Transverse colon (tissue), 4 donors: ENCODE measurements at regions of chr2 and their contacts with region 1.

Region 1: DNA sequence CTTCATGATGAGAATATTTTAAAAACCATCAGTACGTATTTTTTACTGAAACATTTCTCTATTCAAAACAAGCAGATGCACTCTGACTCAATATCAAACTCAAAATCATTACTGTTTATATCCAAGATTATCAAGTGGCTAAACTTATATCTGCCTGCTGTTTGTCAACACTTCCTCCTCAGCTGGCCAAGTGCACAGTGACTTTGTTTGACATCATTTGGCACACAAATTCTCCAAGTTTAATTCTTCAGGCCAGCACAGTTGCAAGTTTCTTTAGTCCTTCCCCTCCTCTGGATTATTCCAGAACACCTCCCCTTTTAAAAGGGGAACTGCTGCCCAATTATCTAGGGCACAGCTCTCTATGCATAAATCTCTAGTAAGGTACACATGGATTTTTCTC is 346.6 kb downstream of the FSIP2 start:
- DNase-seq: no peak
- H3K4me3 ChIP-seq: no peak overlapping the region
- H3K27ac ChIP-seq: no peak overlapping the region
- H3K4me1 ChIP-seq: no peaks in the 10 kb centered on the region
- H3K27me3 ChIP-seq: no peaks in the 10 kb centered on the region
- CTCF ChIP-seq: no peak
- EP300 ChIP-seq: no peak
- POLR2A ChIP-seq: no peak

Region 2: DNA sequence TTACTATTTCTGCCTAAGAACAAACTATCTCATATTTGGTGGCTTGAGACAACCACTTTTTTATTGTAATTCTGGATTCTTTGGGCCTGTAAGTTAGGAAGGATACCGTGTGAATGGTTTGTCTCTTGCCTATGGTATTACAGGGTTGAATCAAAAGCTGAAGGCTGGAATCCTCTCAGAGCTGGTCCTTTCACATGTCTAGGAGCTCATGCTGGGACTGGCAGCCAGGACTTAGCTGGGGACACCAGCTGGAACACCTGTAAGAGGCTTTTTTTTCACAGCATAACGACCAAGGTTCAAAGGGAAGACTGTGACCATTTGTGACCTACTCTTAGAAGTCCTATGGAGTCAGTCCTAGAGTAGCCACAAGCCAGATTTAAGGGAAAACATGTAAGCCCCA is 1260.6 kb before region 1 on chr2:
- in situ Hi-C with region 1: no loop called
- intact Hi-C with region 1: no loop called
- DNase-seq: no peak
- H3K4me3 ChIP-seq: no peak overlapping the region
- H3K27ac ChIP-seq: no peak overlapping the region
- H3K4me1 ChIP-seq: no peaks in the 10 kb centered on the region
- H3K27me3 ChIP-seq: no peaks in the 10 kb centered on the region
- CTCF ChIP-seq: no peak
- EP300 ChIP-seq: no peak
- POLR2A ChIP-seq: no peak

Region 3: DNA sequence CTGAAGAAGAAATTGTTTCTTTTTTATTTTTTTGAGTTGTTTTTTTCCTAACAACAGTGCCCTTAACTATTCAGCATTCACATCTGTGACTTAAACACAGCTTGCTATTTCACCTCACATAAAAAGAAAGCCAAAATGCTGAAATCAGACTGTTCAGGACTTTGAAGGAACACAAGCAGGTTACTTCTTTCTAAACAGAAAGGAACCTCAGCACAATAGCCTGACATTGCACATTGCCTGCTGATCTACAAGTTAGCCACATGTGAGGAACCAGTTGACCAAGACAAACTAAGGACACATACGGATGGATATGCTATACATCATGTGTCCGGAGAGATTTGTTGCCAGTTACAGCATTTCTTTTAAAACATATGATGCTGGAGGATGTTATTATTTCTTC is 15.6 kb before region 1 on chr2:
- in situ Hi-C with region 1: no loop called
- intact Hi-C with region 1: loop called (anchors 1 kb)
- DNase-seq: no peak
- H3K4me3 ChIP-seq: no peak overlapping the region
- H3K27ac ChIP-seq: no peak overlapping the region
- H3K4me1 ChIP-seq: no peaks in the 10 kb centered on the region
- H3K27me3 ChIP-seq: no peaks in the 10 kb centered on the region
- CTCF ChIP-seq: no peak
- EP300 ChIP-seq: no peak
- POLR2A ChIP-seq: no peak